A673 (cell line): ENCODE measurements at regions of chr3 and their contacts with region 1.

Region 1: DNA sequence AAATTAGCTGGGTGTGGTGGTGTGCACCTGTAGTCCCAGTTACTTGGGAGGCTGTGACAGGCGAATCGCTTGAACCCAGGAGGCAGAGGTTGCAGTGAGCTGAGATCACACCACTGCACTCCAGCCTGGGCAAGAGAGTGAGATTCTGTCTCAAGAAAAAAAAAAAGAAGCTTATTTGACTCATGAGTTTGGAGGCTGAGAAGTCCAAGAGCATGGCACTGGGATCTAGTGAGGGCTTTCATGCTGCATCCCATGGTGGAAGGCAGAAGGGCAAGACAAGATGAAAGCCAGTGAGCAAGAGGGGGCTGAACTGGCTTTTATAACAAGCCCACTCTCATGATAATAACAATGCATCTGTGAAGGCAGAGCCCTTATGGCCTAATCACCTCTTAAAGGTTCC is 33.4 kb downstream of the SEC62 start:
- DNase-seq: no peak
- H3K4me3 ChIP-seq: no peak overlapping the region
- H3K27ac ChIP-seq: no peak overlapping the region
- H3K4me1 ChIP-seq: no peaks in the 10 kb centered on the region
- H3K27me3 ChIP-seq: no peaks in the 10 kb centered on the region
- CTCF ChIP-seq: no peak

Region 2: GRCh38 chr3:170021083-170021482 is 21.0 kb after region 1 on chr3:
- CTCF ChIA-PET with region 1: interaction called, 3 read pairs
- POLR2A ChIA-PET with region 1: interaction called, 11 read pairs
- intact Hi-C with region 1: no loop called
- DNase-seq: no peak
- H3K4me3 ChIP-seq: no peak overlapping the region
- H3K27ac ChIP-seq: no peak overlapping the region
- H3K4me1 ChIP-seq: no peaks in the 10 kb centered on the region
- H3K27me3 ChIP-seq: no peaks in the 10 kb centered on the region
- CTCF ChIP-seq: peak; percentile 26; the same call in 1 of the 2 replicates

Region 3: DNA sequence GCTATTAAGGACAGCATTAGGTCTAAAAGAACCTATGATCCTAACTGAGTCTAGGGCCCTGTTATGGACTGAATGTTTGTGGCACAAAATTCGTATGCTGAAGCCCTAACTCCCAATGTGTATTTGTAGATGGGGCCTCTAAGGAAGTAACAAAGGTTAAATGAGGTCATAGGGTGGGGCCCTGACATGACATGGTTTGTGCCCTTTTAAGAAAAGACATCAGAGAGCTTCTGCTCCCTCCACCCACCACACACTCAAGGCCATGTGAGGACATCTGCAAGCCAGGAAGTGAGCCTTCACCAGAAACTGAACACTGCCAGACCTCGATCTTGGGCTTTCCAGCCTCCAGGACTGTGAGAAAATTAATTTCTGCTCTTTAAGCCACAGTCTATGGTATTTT is 132.3 kb after region 1 on chr3:
- CTCF ChIA-PET with region 1: no interaction called
- POLR2A ChIA-PET with region 1: no interaction called
- intact Hi-C with region 1: no loop called
- DNase-seq: no peak
- H3K4me3 ChIP-seq: no peak overlapping the region
- H3K27ac ChIP-seq: no peak overlapping the region
- H3K4me1 ChIP-seq: peaks cover 33% of the 10 kb centered on the region
- H3K27me3 ChIP-seq: no peaks in the 10 kb centered on the region
- CTCF ChIP-seq: no peak

Region 4: GRCh38 chr3:171491361-171491760 is 1491.3 kb after region 1 on chr3:
- CTCF ChIA-PET with region 1: no interaction called
- POLR2A ChIA-PET with region 1: no interaction called
- intact Hi-C with region 1: no loop called
- DNase-seq: no peak
- H3K4me3 ChIP-seq: no peak overlapping the region
- H3K27ac ChIP-seq: no peak overlapping the region
- H3K4me1 ChIP-seq: no peaks in the 10 kb centered on the region
- H3K27me3 ChIP-seq: no peaks in the 10 kb centered on the region
- CTCF ChIP-seq: no peak